Panc1 (cell line): ENCODE measurements at regions of chr19 and their contacts with region 1.

Region 1: GRCh38 chr19:19966862-19967261 is 66.1 kb downstream of the ZNF93 start:
- DNase-seq: no peak
- ATAC-seq: no peak
- H3K4me3 ChIP-seq: no peak overlapping the region
- H3K27ac ChIP-seq: no peak overlapping the region
- H3K4me1 ChIP-seq: no peaks in the 10 kb centered on the region
- H3K27me3 ChIP-seq: no peaks in the 10 kb centered on the region
- CTCF ChIP-seq: no peak

Region 2: GRCh38 chr19:19865739-19866481 is 101.0 kb before region 1 on chr19 and contains the start of gene ZNF253:
- CTCF ChIA-PET with region 1: no interaction called
- POLR2A ChIA-PET with region 1: interaction called, 12 read pairs
- in situ Hi-C with region 1: no loop called
- intact Hi-C with region 1: no loop called
- DNase-seq: peak; percentile 64
- ATAC-seq: peak; percentile 98
- H3K4me3 ChIP-seq: peak within 1 kb of the TSS; percentile 83 to 96
- H3K27ac ChIP-seq: peak within 1 kb of the TSS; percentile 92
- H3K4me1 ChIP-seq: no peaks in the 10 kb centered on the region
- H3K27me3 ChIP-seq: no peaks in the 10 kb centered on the region
- CTCF ChIP-seq: no peak
- total RNA-seq, gene ZNF253: 8.9 TPM

Region 3: DNA sequence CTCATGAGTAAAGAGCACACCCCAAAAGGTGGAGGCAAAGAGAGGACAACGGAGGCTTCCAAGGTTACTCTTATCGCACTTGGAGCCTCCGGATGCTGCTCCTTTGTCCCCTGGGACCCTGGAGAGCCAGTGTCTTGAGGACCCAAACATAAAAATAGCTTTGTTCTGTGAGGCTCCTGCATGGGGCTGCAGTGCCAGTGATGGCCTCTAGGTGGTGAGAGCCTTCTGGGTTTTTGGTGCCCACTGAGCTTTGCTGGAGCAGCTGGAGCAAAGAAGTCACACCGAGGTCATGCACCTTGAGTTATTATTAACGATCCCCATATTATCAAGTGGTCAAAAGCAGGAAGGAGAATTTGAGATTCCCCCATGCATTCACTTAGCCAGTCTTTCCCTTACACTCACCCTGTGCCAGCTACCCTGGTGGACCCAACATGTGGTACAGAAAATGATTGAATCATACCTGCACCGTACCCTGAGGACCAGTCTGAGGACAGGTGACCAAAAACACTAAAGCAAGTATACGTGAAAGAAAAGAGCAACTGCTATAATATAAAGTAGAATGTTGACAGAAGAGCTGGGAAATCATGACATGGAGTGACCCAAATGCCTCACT is 30.9 kb after region 1 on chr19:
- CTCF ChIA-PET with region 1: no interaction called
- POLR2A ChIA-PET with region 1: no interaction called
- in situ Hi-C with region 1: no loop called
- intact Hi-C with region 1: no loop called
- DNase-seq: no peak
- ATAC-seq: no peak
- H3K4me3 ChIP-seq: no peak overlapping the region
- H3K27ac ChIP-seq: no peak overlapping the region
- H3K4me1 ChIP-seq: no peaks in the 10 kb centered on the region
- H3K27me3 ChIP-seq: no peaks in the 10 kb centered on the region
- CTCF ChIP-seq: peak; percentile 43

Region 4: DNA sequence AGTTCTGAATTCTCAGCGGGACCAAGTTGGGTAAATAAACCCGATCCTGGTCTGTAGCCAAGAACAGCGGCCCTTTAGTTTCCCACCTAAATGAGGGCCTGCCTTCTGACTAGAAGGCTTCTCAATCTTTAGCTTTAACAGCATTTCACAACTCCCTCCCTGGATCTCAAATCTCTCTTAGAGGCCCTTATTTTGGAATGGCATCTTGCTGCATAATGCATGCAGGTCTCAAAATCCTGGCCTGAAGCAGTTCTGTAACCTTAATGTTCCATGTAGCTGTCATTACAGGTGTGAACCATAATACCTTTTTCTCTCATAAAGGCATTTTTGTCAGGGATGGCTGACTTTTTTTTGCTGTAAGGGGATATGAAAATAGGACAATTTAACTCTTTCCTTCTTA is 140.4 kb after region 1 on chr19:
- CTCF ChIA-PET with region 1: no interaction called
- POLR2A ChIA-PET with region 1: no interaction called
- in situ Hi-C with region 1: no loop called
- intact Hi-C with region 1: no loop called
- DNase-seq: no peak
- ATAC-seq: no peak
- H3K4me3 ChIP-seq: no peak overlapping the region
- H3K27ac ChIP-seq: no peak overlapping the region
- H3K4me1 ChIP-seq: no peaks in the 10 kb centered on the region
- H3K27me3 ChIP-seq: no peaks in the 10 kb centered on the region
- CTCF ChIP-seq: no peak